Psoas muscle (tissue), 8 donors: ENCODE measurements at regions of chrX and their contacts with region 1.

Region 1: GRCh38 chrX:18833071-18833731 is 125.8 kb downstream of the PPEF1 start:
- DNase-seq: peak; percentile 58 to 84
- ATAC-seq: peak; percentile 97 to 98 (median 97)
- H3K4me3 ChIP-seq: peak overlapping the region; percentile 49
- H3K27ac ChIP-seq: peak overlapping the region; percentile 82
- H3K4me1 ChIP-seq: no peaks in the 10 kb centered on the region
- H3K27me3 ChIP-seq: no peaks in the 10 kb centered on the region
- CTCF ChIP-seq: no peak

Region 2: DNA sequence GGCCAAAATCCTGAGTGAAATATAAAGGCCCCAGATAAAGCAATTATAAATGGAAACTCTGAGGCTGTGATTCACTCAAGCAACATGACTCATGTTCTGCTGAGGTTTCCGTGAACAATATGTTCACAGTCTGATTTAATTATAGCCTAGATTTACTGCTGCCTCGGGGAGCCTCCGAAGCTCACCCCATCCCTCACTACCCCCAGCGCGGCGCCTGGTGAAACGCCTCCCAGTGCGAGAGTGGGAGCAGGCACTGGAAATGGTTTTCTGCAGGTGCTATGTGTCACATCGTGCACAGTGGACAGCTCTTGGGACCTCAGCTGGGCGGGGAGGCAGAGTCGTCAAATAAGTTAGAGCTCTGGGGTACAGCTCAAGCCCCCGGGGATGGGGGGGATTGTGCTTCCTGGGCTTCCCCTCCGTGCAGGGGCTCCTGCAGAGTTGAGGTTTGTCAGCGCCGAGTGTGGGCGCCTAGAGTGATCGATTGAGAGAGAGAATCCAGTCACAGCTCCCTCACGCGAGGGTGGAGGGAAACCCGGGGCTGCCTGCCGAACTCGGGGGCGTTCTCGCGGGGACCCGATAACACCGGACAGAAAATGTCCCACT is 40.1 kb after region 1 on chrX:
- intact Hi-C with region 1: loop called in 1 of 2 experiments (anchors 1 kb)
- DNase-seq: peak in 1 of 2 donors; percentile 70
- ATAC-seq: peak; percentile 81 to 96 (median 94)
- H3K4me3 ChIP-seq: no peak overlapping the region
- H3K27ac ChIP-seq: peak overlapping the region; percentile 43
- H3K4me1 ChIP-seq: no peaks in the 10 kb centered on the region
- H3K27me3 ChIP-seq: no peaks in the 10 kb centered on the region
- CTCF ChIP-seq: no peak